Ascending aorta (tissue), 2 donors: ENCODE measurements at regions of chr9 and their contacts with region 1.

Region 1: GRCh38 chr9:30765318-30765717 is 1619.1 kb upstream of the ACO1 start:
- DNase-seq: no peak
- H3K4me3 ChIP-seq: no peak overlapping the region
- H3K27ac ChIP-seq: no peak overlapping the region
- H3K4me1 ChIP-seq: no peaks in the 10 kb centered on the region
- H3K27me3 ChIP-seq: no peaks in the 10 kb centered on the region
- CTCF ChIP-seq: no peak

Region 2: DNA sequence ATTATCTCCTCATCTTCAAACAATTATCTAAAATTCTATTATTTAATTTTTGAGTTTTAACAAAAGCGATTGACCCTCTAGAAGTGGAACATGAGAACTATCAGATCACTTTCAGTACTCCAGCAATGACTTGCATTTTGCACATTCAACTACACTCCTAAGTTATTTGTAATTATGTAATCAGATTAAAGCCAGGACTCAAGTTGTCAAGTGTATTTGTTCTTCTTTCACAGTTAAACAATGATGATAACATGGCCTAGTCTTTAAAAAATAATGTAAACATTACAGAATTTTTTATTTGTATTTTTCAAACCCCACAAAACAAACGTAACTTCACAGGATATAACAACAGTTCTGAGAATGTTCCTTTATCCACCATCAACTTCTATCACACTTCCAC is 529.8 kb before region 1 on chr9:
- intact Hi-C with region 1: no loop called
- DNase-seq: no peak
- H3K4me3 ChIP-seq: no peak overlapping the region
- H3K27ac ChIP-seq: no peak overlapping the region
- H3K4me1 ChIP-seq: no peaks in the 10 kb centered on the region
- H3K27me3 ChIP-seq: no peaks in the 10 kb centered on the region
- CTCF ChIP-seq: no peak

Region 3: DNA sequence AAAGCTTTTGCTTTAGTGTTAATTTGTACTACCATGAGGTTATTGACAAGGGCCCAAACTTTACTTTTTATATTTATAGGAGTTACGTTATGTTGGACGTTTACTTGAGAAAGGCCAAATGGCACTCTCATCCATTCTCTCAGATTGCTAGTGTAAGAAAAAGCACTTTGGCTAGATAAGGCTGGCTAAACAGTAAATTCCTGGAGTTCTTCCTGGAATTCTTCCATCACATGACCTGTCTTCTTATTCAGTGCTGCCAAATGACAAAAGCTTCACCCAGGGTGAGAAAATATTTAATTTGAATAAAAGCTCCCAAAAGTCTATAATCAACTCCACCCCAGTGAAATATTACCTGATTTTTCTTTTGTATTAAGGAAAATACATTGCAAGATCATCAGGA is 50.3 kb after region 1 on chr9:
- intact Hi-C with region 1: loop called (anchors 10 kb)
- DNase-seq: no peak
- H3K4me3 ChIP-seq: no peak overlapping the region
- H3K27ac ChIP-seq: no peak overlapping the region
- H3K4me1 ChIP-seq: no peaks in the 10 kb centered on the region
- H3K27me3 ChIP-seq: no peaks in the 10 kb centered on the region
- CTCF ChIP-seq: no peak

Region 4: GRCh38 chr9:30846651-30847050 is 81.3 kb after region 1 on chr9:
- intact Hi-C with region 1: no loop called
- DNase-seq: no peak
- H3K4me3 ChIP-seq: no peak overlapping the region
- H3K27ac ChIP-seq: no peak overlapping the region
- H3K4me1 ChIP-seq: no peaks in the 10 kb centered on the region
- H3K27me3 ChIP-seq: no peaks in the 10 kb centered on the region
- CTCF ChIP-seq: no peak